Ovary (tissue), 10 donors: ENCODE measurements at regions of chr9 and their contacts with region 1.

Region 1: GRCh38 chr9:129783516-129784361 is 19.2 kb upstream of the TOR1B start:
- DNase-seq: peak; percentile 58 to 80 (median 70)
- H3K4me3 ChIP-seq: no peak overlapping the region
- H3K27ac ChIP-seq: no peak overlapping the region
- H3K4me1 ChIP-seq: no peaks in the 10 kb centered on the region
- H3K27me3 ChIP-seq: no peaks in the 10 kb centered on the region
- CTCF ChIP-seq: peak; percentile 63 to 93 (median 93)
- EP300 ChIP-seq: no peak
- POLR2A ChIP-seq: no peak

Region 2: GRCh38 chr9:129125476-129125875 is 658.3 kb before region 1 on chr9:
- intact Hi-C with region 1: loop called (anchors 5 to 10 kb)
- DNase-seq: no peak
- H3K4me3 ChIP-seq: no peak overlapping the region
- H3K27ac ChIP-seq: no peak overlapping the region
- H3K4me1 ChIP-seq: no peaks in the 10 kb centered on the region
- H3K27me3 ChIP-seq: no peaks in the 10 kb centered on the region
- CTCF ChIP-seq: no peak
- EP300 ChIP-seq: no peak
- POLR2A ChIP-seq: no peak

Region 3: GRCh38 chr9:129131300-129132145 is 652.2 kb before region 1 on chr9:
- intact Hi-C with region 1: loop called (anchors 5 to 10 kb)
- DNase-seq: peak; percentile 68 to 85 (median 81)
- H3K4me3 ChIP-seq: no peak overlapping the region
- H3K27ac ChIP-seq: no peak overlapping the region
- H3K4me1 ChIP-seq: no peaks in the 10 kb centered on the region
- H3K27me3 ChIP-seq: no peaks in the 10 kb centered on the region
- CTCF ChIP-seq: peak; percentile 81 to 96 (median 96)
- EP300 ChIP-seq: no peak
- POLR2A ChIP-seq: no peak

Region 4: DNA sequence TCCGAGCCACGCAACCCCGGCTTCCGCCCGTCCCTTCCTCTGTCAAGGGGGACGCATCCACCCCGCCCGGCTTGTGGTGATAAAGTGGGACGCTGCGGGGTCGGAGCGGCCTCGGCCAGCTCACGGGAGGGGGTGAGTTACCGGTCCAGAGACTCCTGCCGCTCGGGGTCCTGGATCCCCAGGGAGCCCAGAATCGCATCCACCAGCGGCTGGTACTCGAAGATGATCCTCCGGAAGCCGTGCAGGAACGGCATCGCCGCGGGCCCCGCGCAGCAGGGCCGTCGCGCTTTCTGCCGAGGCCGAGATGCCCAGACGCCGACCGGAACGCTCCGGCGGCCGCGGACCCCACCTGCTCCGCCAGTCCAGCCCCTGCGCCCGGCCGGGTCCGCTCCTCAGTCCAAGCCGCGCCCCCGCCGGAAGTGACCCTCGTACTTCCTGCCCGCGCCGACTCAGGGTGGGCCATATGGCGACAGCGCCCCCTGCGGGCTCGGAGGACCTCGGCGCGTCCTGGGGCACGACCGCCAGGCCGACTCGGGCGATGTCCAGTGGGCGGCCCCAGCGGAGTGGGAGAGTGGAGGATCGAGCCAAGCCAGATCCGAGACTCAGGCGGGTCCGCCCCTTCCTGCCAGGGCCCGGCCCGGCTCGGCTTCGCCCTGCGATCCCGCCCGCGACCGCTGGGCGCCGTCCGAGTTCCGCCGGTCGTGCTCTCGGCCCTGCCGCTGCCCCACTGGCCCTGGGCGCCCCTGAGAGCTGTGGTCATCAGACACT is 141.8 kb before region 1 on chr9 and contains the start of gene ASB6:
- intact Hi-C with region 1: loop called (anchors 5 kb)
- DNase-seq: peak; percentile 98 to 99 (median 99)
- H3K4me3 ChIP-seq: peak within 1 kb of the TSS; percentile 89
- H3K27ac ChIP-seq: peak within 1 kb of the TSS; percentile 66 to 89
- H3K4me1 ChIP-seq: peaks cover 9% of the 10 kb centered on the region
- H3K27me3 ChIP-seq: no peaks in the 10 kb centered on the region
- CTCF ChIP-seq: peak; percentile 99 to 100 (median 100)
- EP300 ChIP-seq: no peak
- POLR2A ChIP-seq: peak; percentile 35
- total RNA-seq, gene ASB6: 11.3 to 20.1 (median 17.3) TPM

Region 5: DNA sequence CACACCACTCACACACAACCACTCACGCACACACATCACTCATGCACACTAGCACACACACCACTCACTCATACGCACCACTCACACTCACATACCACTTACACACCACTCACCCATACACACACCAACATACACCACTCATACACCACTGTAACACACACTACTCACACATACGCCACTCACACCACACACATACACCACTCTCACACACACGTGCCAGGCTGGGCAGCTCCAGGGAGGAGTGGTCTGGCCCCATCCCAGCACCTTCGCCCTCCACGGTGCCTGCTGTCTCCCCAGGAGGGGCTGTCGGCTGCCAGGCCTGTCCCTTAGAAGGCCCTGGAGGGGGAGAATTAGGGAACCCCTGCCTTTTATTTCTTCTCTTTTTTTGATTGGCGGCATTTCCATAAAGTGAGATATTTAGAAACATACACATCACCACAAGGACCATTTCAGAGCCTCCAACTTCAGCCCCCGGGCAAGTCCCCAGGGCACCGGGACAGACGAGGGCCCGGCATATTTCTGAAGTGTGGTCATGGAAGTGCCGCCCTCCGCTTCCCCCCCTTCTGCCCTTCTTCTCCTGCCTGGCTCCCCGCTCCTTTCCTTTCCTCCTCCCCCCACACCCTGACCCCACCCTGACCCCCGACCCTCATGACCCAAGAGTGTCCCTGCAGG is 135.5 kb before region 1 on chr9:
- intact Hi-C with region 1: loop called (anchors 5 kb)
- DNase-seq: no peak
- H3K4me3 ChIP-seq: no peak overlapping the region
- H3K27ac ChIP-seq: no peak overlapping the region
- H3K4me1 ChIP-seq: no peaks in the 10 kb centered on the region
- H3K27me3 ChIP-seq: no peaks in the 10 kb centered on the region
- CTCF ChIP-seq: no peak
- EP300 ChIP-seq: no peak
- POLR2A ChIP-seq: no peak

Region 6: DNA sequence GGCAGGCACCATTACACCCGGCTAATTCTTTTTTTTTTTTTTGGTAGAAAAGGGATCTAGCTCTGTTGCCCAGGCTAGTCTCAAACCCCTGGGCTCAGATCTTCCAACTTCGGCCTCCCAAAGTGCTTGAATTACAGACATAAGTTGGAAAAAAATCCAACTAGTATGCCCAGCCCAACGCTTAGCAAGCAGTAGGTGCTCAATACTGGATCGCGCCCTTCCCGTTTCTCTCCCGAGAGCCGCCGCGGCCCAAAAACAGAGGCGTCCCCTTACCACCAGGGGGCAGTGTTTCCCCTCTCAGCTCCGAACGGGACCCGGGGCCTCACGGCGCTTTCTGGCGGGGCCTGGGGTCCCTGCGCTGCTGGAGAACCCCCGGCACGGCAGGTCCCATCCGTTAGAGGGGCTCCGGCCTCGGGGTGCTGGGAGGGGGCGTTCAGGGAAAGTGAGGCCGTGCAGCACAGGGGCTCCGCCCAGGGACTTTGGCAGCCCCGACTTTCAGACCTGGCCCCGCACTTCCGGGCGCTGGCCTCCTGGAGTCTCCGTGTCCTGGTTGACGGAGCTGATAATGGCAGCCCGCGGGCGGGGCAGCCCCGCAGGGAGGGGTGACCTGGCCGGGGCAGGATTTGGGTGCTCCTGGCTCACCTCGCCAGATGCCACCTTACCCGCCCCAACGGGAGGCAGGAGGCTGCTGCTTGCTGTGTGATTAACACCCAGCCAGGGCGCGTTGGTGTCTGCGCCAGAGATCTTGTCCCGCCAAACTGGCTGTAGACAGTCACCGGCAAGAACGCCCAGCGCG is 46.1 kb before region 1 on chr9:
- intact Hi-C with region 1: loop called (anchors 1 to 5 kb)
- DNase-seq: peak; percentile 78 to 87 (median 87)
- H3K4me3 ChIP-seq: peak overlapping the region; percentile 63
- H3K27ac ChIP-seq: peak overlapping the region in 1 of 2 donors; percentile 44
- H3K4me1 ChIP-seq: no peaks in the 10 kb centered on the region
- H3K27me3 ChIP-seq: no peaks in the 10 kb centered on the region
- CTCF ChIP-seq: peak; percentile 97 to 98 (median 97)
- EP300 ChIP-seq: no peak
- POLR2A ChIP-seq: no peak

Region 7: GRCh38 chr9:129900263-129901027 is 116.7 kb after region 1 on chr9:
- intact Hi-C with region 1: no loop called
- DNase-seq: no peak
- H3K4me3 ChIP-seq: no peak overlapping the region
- H3K27ac ChIP-seq: no peak overlapping the region
- H3K4me1 ChIP-seq: no peaks in the 10 kb centered on the region
- H3K27me3 ChIP-seq: no peaks in the 10 kb centered on the region
- CTCF ChIP-seq: no peak
- EP300 ChIP-seq: no peak
- POLR2A ChIP-seq: no peak